IMR-90 (cell line): ENCODE measurements at regions of chrX and their contacts with region 1.

Region 1: DNA sequence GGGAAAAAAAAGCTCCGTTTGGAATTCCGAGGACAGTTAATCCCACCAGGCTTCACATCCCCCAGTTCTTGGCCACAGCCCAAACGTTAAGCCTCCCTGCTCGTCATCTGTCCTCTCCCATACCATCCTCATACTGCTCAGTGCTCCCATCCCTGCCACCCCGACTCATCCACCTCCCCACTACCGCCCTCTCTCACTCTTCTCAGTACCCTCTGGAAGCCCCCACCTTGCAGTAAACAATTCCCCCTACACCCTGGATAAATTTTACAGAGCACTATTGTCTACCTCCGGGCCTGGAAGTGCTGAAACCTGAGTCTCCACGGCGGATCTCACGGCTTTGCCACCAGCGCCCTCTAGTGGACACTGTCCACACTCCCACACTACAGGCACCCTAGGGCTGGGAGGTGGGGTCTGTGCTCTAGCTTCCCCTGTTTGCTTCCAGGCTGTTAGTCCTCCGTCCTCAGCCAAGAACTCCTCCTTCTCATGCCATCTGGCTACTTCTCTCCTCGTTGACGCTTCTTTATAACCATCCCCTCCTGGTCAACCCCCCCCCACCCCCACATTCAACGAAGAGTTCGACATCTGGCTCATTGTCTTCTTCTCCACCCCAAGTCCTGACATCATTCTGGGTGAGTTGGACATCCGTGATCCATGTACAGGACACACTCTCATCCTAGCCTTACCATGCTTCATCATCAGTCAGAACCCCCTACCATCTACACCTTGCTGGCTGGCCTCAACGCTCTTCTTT is 54.5 kb downstream of the RTL9 start:
- DNase-seq: peak; percentile 65
- ATAC-seq: peak; percentile 77
- H3K4me3 ChIP-seq: no peak overlapping the region
- H3K27ac ChIP-seq: no peak overlapping the region
- H3K4me1 ChIP-seq: peaks cover 16% of the 10 kb centered on the region
- H3K27me3 ChIP-seq: peaks cover 4% of the 10 kb centered on the region; the same call in 1 of the 2 replicates
- CTCF ChIP-seq: peak; percentile 80
- POLR2A ChIP-seq: no peak
- RAD21 ChIP-seq: peak; percentile 82

Region 2: GRCh38 chrX:109485470-109486340 is 927.4 kb before region 1 on chrX:
- CTCF ChIA-PET with region 1: no interaction called
- POLR2A ChIA-PET with region 1: no interaction called
- dilution Hi-C with region 1: no loop called
- in situ Hi-C with region 1: no loop called
- intact Hi-C with region 1: loop called (anchors 10 kb)
- DNase-seq: peak; percentile 66
- ATAC-seq: peak; percentile 80
- H3K4me3 ChIP-seq: no peak overlapping the region
- H3K27ac ChIP-seq: no peak overlapping the region
- H3K4me1 ChIP-seq: no peaks in the 10 kb centered on the region
- H3K27me3 ChIP-seq: peaks cover 9% of the 10 kb centered on the region
- CTCF ChIP-seq: peak; percentile 100
- POLR2A ChIP-seq: no peak
- RAD21 ChIP-seq: peak; percentile 75

Region 3: DNA sequence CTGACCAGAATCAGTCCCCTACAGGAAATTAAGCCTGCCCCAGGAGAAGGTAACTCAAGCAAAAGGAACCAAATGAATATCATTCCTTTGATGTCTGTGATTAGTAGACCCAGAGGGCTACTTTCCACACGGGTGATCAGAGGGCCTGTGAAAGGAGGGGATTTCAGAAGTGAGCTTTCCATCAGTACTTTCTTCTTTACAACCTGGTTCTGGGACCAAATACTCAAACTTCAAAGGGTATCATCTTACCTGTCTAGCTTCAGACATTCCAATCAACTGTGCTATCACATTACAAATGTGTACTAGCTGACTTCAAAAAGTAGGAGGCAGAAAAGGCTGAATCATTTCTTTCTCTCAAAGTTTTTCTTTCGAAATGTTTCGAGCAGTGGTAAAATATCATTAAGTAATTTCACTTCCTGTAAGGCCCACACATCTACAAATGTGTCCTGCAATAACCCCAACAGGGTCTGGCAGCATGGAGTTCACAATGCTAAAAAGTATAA is 704.0 kb before region 1 on chrX:
- CTCF ChIA-PET with region 1: no interaction called
- POLR2A ChIA-PET with region 1: no interaction called
- dilution Hi-C with region 1: no loop called
- in situ Hi-C with region 1: loop called (anchors 25 kb)
- intact Hi-C with region 1: no loop called
- DNase-seq: peak; percentile 65
- ATAC-seq: peak; percentile 55
- H3K4me3 ChIP-seq: no peak overlapping the region
- H3K27ac ChIP-seq: peak overlapping the region; percentile 48; the same call in 1 of the 2 replicates
- H3K4me1 ChIP-seq: peaks cover 4% of the 10 kb centered on the region
- H3K27me3 ChIP-seq: no peaks in the 10 kb centered on the region; the same call in 1 of the 2 replicates
- CTCF ChIP-seq: peak; percentile 11; the same call in 1 of the 2 replicates
- POLR2A ChIP-seq: no peak
- RAD21 ChIP-seq: no peak

Region 4: GRCh38 chrX:109911046-109911445 is 502.1 kb before region 1 on chrX:
- CTCF ChIA-PET with region 1: no interaction called
- POLR2A ChIA-PET with region 1: no interaction called
- dilution Hi-C with region 1: no loop called
- in situ Hi-C with region 1: loop called (anchors 25 kb)
- intact Hi-C with region 1: loop called (anchors 5 kb)
- DNase-seq: no peak
- ATAC-seq: no peak; the same call in 1 of the 2 replicates
- H3K4me3 ChIP-seq: no peak overlapping the region
- H3K27ac ChIP-seq: no peak overlapping the region
- H3K4me1 ChIP-seq: no peaks in the 10 kb centered on the region
- H3K27me3 ChIP-seq: peaks cover 4% of the 10 kb centered on the region; the same call in 1 of the 2 replicates
- CTCF ChIP-seq: peak; percentile 51
- POLR2A ChIP-seq: no peak
- RAD21 ChIP-seq: 0 out of 2 replicates have a peak, but pooled peaks have one; percentile 22

Region 5: GRCh38 chrX:110002300-110003166 is 410.6 kb before region 1 on chrX and contains the start of gene TMEM164:
- CTCF ChIA-PET with region 1: no interaction called
- POLR2A ChIA-PET with region 1: no interaction called
- dilution Hi-C with region 1: no loop called
- in situ Hi-C with region 1: no loop called
- intact Hi-C with region 1: loop called (anchors 5 kb)
- DNase-seq: peak; percentile 66
- ATAC-seq: peak; percentile 95
- H3K4me3 ChIP-seq: peak within 1 kb of the TSS; percentile 95
- H3K27ac ChIP-seq: peak within 1 kb of the TSS; percentile 100
- H3K4me1 ChIP-seq: no peaks in the 10 kb centered on the region
- H3K27me3 ChIP-seq: peaks cover 3% of the 10 kb centered on the region; the same call in 1 of the 2 replicates
- CTCF ChIP-seq: no peak
- POLR2A ChIP-seq: 0 out of 2 replicates have a peak, but pooled peaks have one; percentile 24
- RAD21 ChIP-seq: no peak
- total RNA-seq, gene TMEM164: 5.0 and 6.3 TPM in 2 replicates

Region 6: GRCh38 chrX:110086916-110087484 is 326.1 kb before region 1 on chrX:
- CTCF ChIA-PET with region 1: no interaction called
- POLR2A ChIA-PET with region 1: no interaction called
- dilution Hi-C with region 1: no loop called
- in situ Hi-C with region 1: no loop called
- intact Hi-C with region 1: loop called (anchors 10 kb)
- DNase-seq: peak; percentile 96
- ATAC-seq: peak; percentile 71
- H3K4me3 ChIP-seq: no peak overlapping the region
- H3K27ac ChIP-seq: peak overlapping the region; percentile 99
- H3K4me1 ChIP-seq: peaks cover 7% of the 10 kb centered on the region
- H3K27me3 ChIP-seq: no peaks in the 10 kb centered on the region
- CTCF ChIP-seq: no peak
- POLR2A ChIP-seq: no peak
- RAD21 ChIP-seq: no peak

Region 7: GRCh38 chrX:110156167-110156754 is 256.9 kb before region 1 on chrX:
- CTCF ChIA-PET with region 1: interaction called, 9 read pairs
- POLR2A ChIA-PET with region 1: interaction called, 3 read pairs
- dilution Hi-C with region 1: no loop called
- in situ Hi-C with region 1: loop called (anchors 5 kb)
- intact Hi-C with region 1: loop called (anchors 1 kb)
- DNase-seq: no peak
- ATAC-seq: no peak
- H3K4me3 ChIP-seq: no peak overlapping the region
- H3K27ac ChIP-seq: no peak overlapping the region
- H3K4me1 ChIP-seq: peaks cover 2% of the 10 kb centered on the region; the same call in 1 of the 2 replicates
- H3K27me3 ChIP-seq: no peaks in the 10 kb centered on the region; the same call in 1 of the 2 replicates
- CTCF ChIP-seq: peak; percentile 59
- POLR2A ChIP-seq: no peak
- RAD21 ChIP-seq: peak; percentile 43

Region 8: GRCh38 chrX:110450050-110450449 is 36.9 kb after region 1 on chrX:
- CTCF ChIA-PET with region 1: no interaction called
- POLR2A ChIA-PET with region 1: no interaction called
- dilution Hi-C with region 1: no loop called
- in situ Hi-C with region 1: no loop called
- intact Hi-C with region 1: no loop called
- DNase-seq: peak; percentile 63
- ATAC-seq: peak; percentile 99
- H3K4me3 ChIP-seq: no peak overlapping the region
- H3K27ac ChIP-seq: no peak overlapping the region
- H3K4me1 ChIP-seq: no peaks in the 10 kb centered on the region
- H3K27me3 ChIP-seq: peaks cover 30% of the 10 kb centered on the region
- CTCF ChIP-seq: peak; percentile 84
- POLR2A ChIP-seq: no peak
- RAD21 ChIP-seq: peak; percentile 84